ENCODE measurements at regions of chr2 and their contacts with region 1.

Region 1: GRCh38 chr2:36507408-36507812 is 90.6 kb downstream of the FEZ2 start:
- DNase-seq: peak; percentile 27
- ATAC-seq: peak; percentile 100
- H3K4me3 ChIP-seq: no peak overlapping the region
- H3K27ac ChIP-seq: no peak overlapping the region
- H3K4me1 ChIP-seq: peaks cover 0 to 2% of the 10 kb centered on the region in 2 experiments; a peak in 1 of 4 replicates
- H3K27me3 ChIP-seq: no peaks in the 10 kb centered on the region
- CTCF ChIP-seq: peak; percentile 76 to 89 (median 87)
- POLR2A ChIP-seq: no peak
- RAD21 ChIP-seq: peak; percentile 89

Region 2: DNA sequence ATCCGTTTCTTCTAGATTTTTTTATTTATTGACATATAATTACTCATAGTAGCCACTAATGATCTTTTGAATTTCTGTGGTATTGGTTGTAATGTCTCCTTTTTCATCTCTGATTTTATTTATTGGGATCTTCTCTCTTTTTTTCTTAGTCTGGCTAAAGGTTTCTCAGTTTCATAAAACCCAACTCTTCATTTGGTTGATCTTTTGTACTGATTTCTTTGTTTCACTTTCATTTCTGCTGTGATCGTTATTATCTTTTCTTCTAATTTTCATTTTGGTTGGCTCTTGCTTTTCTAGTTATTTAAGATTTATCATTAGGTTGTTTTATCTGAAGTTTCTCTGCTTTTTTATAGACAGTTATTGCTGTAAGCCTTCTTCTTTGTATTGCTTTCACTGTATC is 615.5 kb before region 1 on chr2:
- CTCF ChIA-PET with region 1: no interaction called
- POLR2A ChIA-PET with region 1: no interaction called
- RAD21 ChIA-PET with region 1: no interaction called
- intact Hi-C with region 1: loop called (anchors 10 kb)
- DNase-seq: no peak
- ATAC-seq: no peak
- H3K4me3 ChIP-seq: no peak overlapping the region
- H3K27ac ChIP-seq: no peak overlapping the region
- H3K4me1 ChIP-seq: no peaks in the 10 kb centered on the region
- H3K27me3 ChIP-seq: no peaks in the 10 kb centered on the region
- CTCF ChIP-seq: no peak
- POLR2A ChIP-seq: no peak
- RAD21 ChIP-seq: no peak

Region 3: GRCh38 chr2:36266536-36267121 is 240.8 kb before region 1 on chr2:
- CTCF ChIA-PET with region 1: no interaction called
- POLR2A ChIA-PET with region 1: no interaction called
- RAD21 ChIA-PET with region 1: no interaction called
- intact Hi-C with region 1: no loop called
- DNase-seq: no peak
- ATAC-seq: no peak
- H3K4me3 ChIP-seq: no peak overlapping the region
- H3K27ac ChIP-seq: no peak overlapping the region
- H3K4me1 ChIP-seq: no peaks in the 10 kb centered on the region
- H3K27me3 ChIP-seq: 0 out of 2 replicates have a peak, but pooled peaks cover 4% of the 10 kb centered on the region
- CTCF ChIP-seq: no peak
- POLR2A ChIP-seq: no peak
- RAD21 ChIP-seq: no peak

Region 4: DNA sequence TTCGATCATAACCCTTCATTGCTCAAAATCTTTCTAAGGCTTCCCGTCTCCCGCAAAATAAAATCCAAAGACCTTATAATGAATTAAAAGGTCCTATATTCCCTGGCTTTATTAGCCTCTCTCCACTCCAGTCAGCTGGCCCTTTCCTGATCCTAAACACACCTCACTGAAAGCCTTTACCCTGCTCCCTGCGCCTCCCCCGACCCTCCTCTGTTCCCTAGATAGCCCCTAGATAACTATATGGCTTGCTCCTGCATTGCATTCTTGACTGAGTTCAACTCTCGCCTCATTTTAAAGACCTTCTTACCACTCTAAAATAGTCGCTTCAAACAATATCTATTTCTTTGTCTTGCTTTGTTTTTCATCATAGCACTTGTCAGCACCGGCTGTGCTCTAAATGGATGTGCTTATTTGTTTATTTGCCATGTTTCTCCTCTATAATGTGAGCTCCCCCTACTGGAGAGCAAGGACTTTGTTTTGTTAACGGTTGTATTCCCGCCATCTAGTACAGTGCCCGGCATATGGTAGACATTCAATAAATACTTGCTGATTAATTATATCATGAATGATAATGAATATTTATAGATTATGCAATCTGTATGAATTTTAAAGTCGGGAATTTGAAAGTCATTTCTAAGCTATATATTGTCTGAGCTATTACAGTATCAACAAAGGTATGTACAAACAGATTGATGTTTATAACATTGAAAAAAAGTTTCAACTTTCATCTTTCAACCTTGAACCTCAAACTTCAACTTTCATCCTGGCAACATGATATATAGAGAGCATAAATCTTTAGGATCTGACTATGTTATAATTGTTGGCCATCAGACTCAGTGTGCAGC is 156.7 kb after region 1 on chr2:
- CTCF ChIA-PET with region 1: no interaction called
- POLR2A ChIA-PET with region 1: no interaction called
- RAD21 ChIA-PET with region 1: no interaction called
- intact Hi-C with region 1: loop called (anchors 5 kb)
- DNase-seq: peak; percentile 64
- ATAC-seq: peak; percentile 97
- H3K4me3 ChIP-seq: no peak overlapping the region
- H3K27ac ChIP-seq: no peak overlapping the region
- H3K4me1 ChIP-seq: peaks cover 0 to 11% of the 10 kb centered on the region in 2 experiments; a peak in 1 of 4 replicates
- H3K27me3 ChIP-seq: no peaks in the 10 kb centered on the region
- CTCF ChIP-seq: peak; percentile 79 to 92 (median 85)
- POLR2A ChIP-seq: no peak
- RAD21 ChIP-seq: peak; percentile 94

Region 5: GRCh38 chr2:36753706-36754221 is 246.4 kb after region 1 on chr2:
- CTCF ChIA-PET with region 1: no interaction called
- POLR2A ChIA-PET with region 1: no interaction called
- RAD21 ChIA-PET with region 1: no interaction called
- intact Hi-C with region 1: loop called (anchors 10 kb)
- DNase-seq: no peak
- ATAC-seq: no peak
- H3K4me3 ChIP-seq: no peak overlapping the region
- H3K27ac ChIP-seq: no peak overlapping the region
- H3K4me1 ChIP-seq: peaks cover 0 to 6% of the 10 kb centered on the region in 2 experiments; a peak in 1 of 4 replicates
- H3K27me3 ChIP-seq: no peaks in the 10 kb centered on the region; the same call in 1 of the 2 replicates
- CTCF ChIP-seq: no peak
- POLR2A ChIP-seq: no peak
- RAD21 ChIP-seq: no peak

Measured in HCT116 (cell line).